Naive thymus-derived CD4-positive, alpha-beta T cell (primary cell): ENCODE measurements at regions of chr1 and their contacts with region 1.

Region 1: DNA sequence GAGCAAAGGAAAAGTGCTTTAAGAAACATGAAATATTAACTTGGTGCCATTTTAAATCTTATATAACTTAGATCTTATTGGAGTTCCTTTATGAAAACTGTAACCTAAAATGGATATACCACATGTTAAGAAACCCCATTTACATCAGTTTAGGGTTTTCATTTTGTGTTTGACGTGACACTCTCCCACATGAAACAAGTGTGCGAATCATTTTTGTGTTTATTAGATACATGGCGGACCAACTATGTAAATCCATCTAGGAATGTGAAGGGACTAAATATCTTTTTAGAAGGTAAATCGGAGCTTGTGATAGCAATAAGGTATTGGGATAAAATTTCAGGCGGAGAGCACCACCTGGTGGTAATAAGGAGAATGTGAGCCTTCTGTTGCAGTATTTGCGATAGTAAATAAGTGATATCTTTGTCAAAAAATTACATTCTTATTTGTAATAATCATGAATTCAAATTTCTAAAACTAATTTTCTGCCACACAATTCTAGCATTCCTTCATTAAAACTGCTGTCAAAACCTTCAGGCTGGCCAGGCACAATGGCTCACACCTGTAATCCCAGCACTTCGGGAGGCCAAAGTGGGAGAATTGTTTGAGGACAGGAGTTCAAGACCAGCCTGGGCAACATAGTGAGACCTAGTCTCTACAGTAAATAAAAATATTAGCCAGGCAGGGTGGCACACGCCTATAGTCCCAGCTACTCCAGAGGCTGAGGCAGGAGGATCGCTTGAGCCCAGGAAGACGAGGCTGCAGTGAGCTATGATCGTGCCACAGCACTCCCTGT is 31.3 kb downstream of the SMAP2 start:
- DNase-seq: peak in 7 of 9 donors; percentile 65 to 84 (median 78)
- ATAC-seq: peak; percentile 85
- H3K4me3 ChIP-seq: no peak overlapping the region
- H3K4me3 Mint-ChIP-seq: peak overlapping the region; percentile 0 to 85 (median 71)
- H3K27ac ChIP-seq: peak overlapping the region; percentile 92
- H3K27ac Mint-ChIP-seq: peak overlapping the region; percentile 84 to 98 (median 92)
- H3K4me1 ChIP-seq: peaks cover 40 to 52% of the 10 kb centered on the region in 2 donors
- H3K4me1 Mint-ChIP-seq: peaks cover 42 to 92% (median 79%) of the 10 kb centered on the region in 7 donors
- H3K27me3 ChIP-seq: no peaks in the 10 kb centered on the region
- H3K27me3 Mint-ChIP-seq: no peaks in the 10 kb centered on the region

Region 2: GRCh38 chr1:39866767-39867166 is 538.1 kb before region 1 on chr1:
- CTCF ChIA-PET with region 1: no interaction called
- POLR2A ChIA-PET with region 1: no interaction called
- intact Hi-C with region 1: no loop called
- DNase-seq: no peak
- ATAC-seq: no peak
- H3K4me3 ChIP-seq: no peak overlapping the region
- H3K4me3 Mint-ChIP-seq: no peak overlapping the region
- H3K27ac ChIP-seq: no peak overlapping the region
- H3K27ac Mint-ChIP-seq: no peak overlapping the region
- H3K4me1 ChIP-seq: no peaks in the 10 kb centered on the region
- H3K4me1 Mint-ChIP-seq: peaks cover 10 to 30% (median 18%) of the 10 kb centered on the region in 7 donors
- H3K27me3 ChIP-seq: no peaks in the 10 kb centered on the region
- H3K27me3 Mint-ChIP-seq: no peaks in the 10 kb centered on the region

Region 3: GRCh38 chr1:40049725-40050124 is 355.1 kb before region 1 on chr1:
- CTCF ChIA-PET with region 1: no interaction called
- POLR2A ChIA-PET with region 1: no interaction called
- intact Hi-C with region 1: no loop called
- DNase-seq: no peak
- ATAC-seq: peak; percentile 37
- H3K4me3 ChIP-seq: peak overlapping the region; percentile 7
- H3K4me3 Mint-ChIP-seq: peak overlapping the region; percentile 3 to 99 (median 72)
- H3K27ac ChIP-seq: peak overlapping the region; percentile 63
- H3K27ac Mint-ChIP-seq: peak overlapping the region; percentile 56 to 97 (median 86)
- H3K4me1 ChIP-seq: peaks cover 61 to 63% of the 10 kb centered on the region in 2 donors
- H3K4me1 Mint-ChIP-seq: peaks cover 65 to 97% (median 85%) of the 10 kb centered on the region in 7 donors
- H3K27me3 ChIP-seq: no peaks in the 10 kb centered on the region
- H3K27me3 Mint-ChIP-seq: no peaks in the 10 kb centered on the region

Region 4: DNA sequence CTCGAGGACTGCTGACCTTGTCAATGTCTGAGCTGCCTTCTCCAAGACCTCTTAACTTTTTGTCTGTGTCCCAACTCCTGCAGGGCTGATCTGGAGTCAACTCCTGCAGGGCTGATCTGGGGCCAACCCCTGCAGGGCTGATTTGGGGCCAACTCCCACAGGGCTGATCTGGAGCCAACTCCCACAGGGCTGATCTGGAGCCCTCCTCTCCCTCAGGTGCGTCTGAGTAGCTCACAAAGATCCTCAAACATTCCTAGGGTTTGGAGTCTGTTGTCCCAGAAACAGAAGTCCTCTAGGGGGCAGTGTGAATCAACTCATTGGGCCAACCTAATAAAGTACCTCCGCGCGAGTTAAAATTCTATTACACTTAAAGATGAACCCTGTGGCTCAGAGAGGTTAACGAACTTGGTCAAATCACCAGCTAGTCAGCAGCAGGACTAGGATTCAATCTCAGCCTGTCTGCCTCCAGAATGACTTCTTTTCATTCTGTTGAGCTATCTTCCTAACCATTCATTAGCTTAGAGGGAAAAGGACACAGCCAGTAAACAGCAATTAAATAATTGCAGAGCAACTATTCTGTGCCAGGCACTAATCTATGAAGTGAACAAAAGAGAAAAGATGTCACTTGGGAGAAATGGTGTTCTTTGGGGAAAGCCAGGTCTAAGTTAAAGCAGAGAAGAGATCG is 260.8 kb before region 1 on chr1:
- CTCF ChIA-PET with region 1: interaction called, 11 read pairs
- POLR2A ChIA-PET with region 1: interaction called, 3 read pairs
- intact Hi-C with region 1: loop called (anchors 1 kb)
- DNase-seq: peak; percentile 19 to 72 (median 57)
- ATAC-seq: peak; percentile 84
- H3K4me3 ChIP-seq: no peak overlapping the region
- H3K4me3 Mint-ChIP-seq: no peak overlapping the region
- H3K27ac ChIP-seq: no peak overlapping the region
- H3K27ac Mint-ChIP-seq: peak overlapping the region in 1 of 9 donors; percentile 5
- H3K4me1 ChIP-seq: no peaks in the 10 kb centered on the region
- H3K4me1 Mint-ChIP-seq: peaks cover 0 to 12% (median 0%) of the 10 kb centered on the region in 7 donors
- H3K27me3 ChIP-seq: no peaks in the 10 kb centered on the region
- H3K27me3 Mint-ChIP-seq: peaks cover 5 to 61% (median 17%) of the 10 kb centered on the region in 5 donors

Region 5: DNA sequence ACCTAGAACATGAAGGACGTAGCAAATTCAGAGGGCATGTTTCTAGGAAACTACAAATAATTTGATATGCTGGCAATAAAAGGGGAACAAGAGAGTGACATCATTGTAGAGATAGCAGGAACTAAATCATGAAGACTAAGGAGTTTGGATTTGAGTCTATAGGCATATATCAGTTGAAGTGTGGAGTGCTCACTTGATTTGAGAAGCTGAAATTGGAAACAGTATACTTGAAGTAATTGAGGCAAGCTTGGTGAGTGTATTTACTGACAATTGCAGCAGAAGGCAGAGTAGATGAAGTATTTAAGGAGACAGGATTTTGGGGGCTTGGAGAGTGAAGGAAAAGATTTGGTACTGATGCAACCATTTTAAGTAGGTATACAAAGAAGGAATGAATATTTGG is 163.5 kb before region 1 on chr1:
- CTCF ChIA-PET with region 1: no interaction called
- POLR2A ChIA-PET with region 1: no interaction called
- intact Hi-C with region 1: loop called in 1 of 2 experiments (anchors 5 kb)
- DNase-seq: no peak
- ATAC-seq: peak; percentile 43
- H3K4me3 ChIP-seq: no peak overlapping the region
- H3K4me3 Mint-ChIP-seq: peak overlapping the region in 3 of 10 donors; percentile 2 to 64 (median 8)
- H3K27ac ChIP-seq: no peak overlapping the region
- H3K27ac Mint-ChIP-seq: peak overlapping the region in 6 of 9 donors; percentile 2 to 81 (median 18)
- H3K4me1 ChIP-seq: peaks cover 12 to 14% of the 10 kb centered on the region in 2 donors
- H3K4me1 Mint-ChIP-seq: peaks cover 7 to 75% (median 19%) of the 10 kb centered on the region in 7 donors
- H3K27me3 ChIP-seq: no peaks in the 10 kb centered on the region
- H3K27me3 Mint-ChIP-seq: no peaks in the 10 kb centered on the region

Region 6: GRCh38 chr1:40344597-40344996 is 60.3 kb before region 1 on chr1:
- CTCF ChIA-PET with region 1: interaction called, 35 read pairs
- POLR2A ChIA-PET with region 1: interaction called, 7 read pairs
- intact Hi-C with region 1: loop called in 1 of 2 experiments (anchors 1 kb)
- DNase-seq: peak in 6 of 9 donors; percentile 25 to 35 (median 30)
- ATAC-seq: peak; percentile 86
- H3K4me3 ChIP-seq: peak overlapping the region; percentile 3
- H3K4me3 Mint-ChIP-seq: peak overlapping the region; percentile 53 to 86 (median 72)
- H3K27ac ChIP-seq: peak overlapping the region; percentile 40
- H3K27ac Mint-ChIP-seq: peak overlapping the region; percentile 34 to 91 (median 84)
- H3K4me1 ChIP-seq: peaks cover 6 to 40% of the 10 kb centered on the region in 2 donors
- H3K4me1 Mint-ChIP-seq: peaks cover 41 to 58% (median 55%) of the 10 kb centered on the region in 7 donors
- H3K27me3 ChIP-seq: no peaks in the 10 kb centered on the region
- H3K27me3 Mint-ChIP-seq: no peaks in the 10 kb centered on the region

Region 7: GRCh38 chr1:40385437-40386358 is 19.2 kb before region 1 on chr1:
- CTCF ChIA-PET with region 1: interaction called, 29 read pairs
- POLR2A ChIA-PET with region 1: interaction called, 168 read pairs
- intact Hi-C with region 1: loop called (anchors 1 kb)
- DNase-seq: peak in 8 of 9 donors; percentile 55 to 97 (median 94)
- ATAC-seq: peak; percentile 86
- H3K4me3 ChIP-seq: peak overlapping the region; percentile 48
- H3K4me3 Mint-ChIP-seq: peak overlapping the region; percentile 79 to 99 (median 87)
- H3K27ac ChIP-seq: peak overlapping the region; percentile 99
- H3K27ac Mint-ChIP-seq: peak overlapping the region; percentile 97 to 99 (median 98)
- H3K4me1 ChIP-seq: peaks cover 82 to 84% of the 10 kb centered on the region in 2 donors
- H3K4me1 Mint-ChIP-seq: peaks cover 71 to 94% (median 90%) of the 10 kb centered on the region in 7 donors
- H3K27me3 ChIP-seq: no peaks in the 10 kb centered on the region
- H3K27me3 Mint-ChIP-seq: no peaks in the 10 kb centered on the region